Activated naive CD4-positive, alpha-beta T cell treated with anti-CD3 and anti-CD28 coated beads for 36 hours (primary cell): ENCODE measurements at regions of chr19 and their contacts with region 1.

Region 1: GRCh38 chr19:21396893-21397572 is at the start of gene ZNF493:
- DNase-seq: peak; percentile 97
- H3K4me3 Mint-ChIP-seq: peak within 1 kb of the TSS; percentile 96
- H3K27ac Mint-ChIP-seq: peak within 1 kb of the TSS; percentile 92
- H3K4me1 Mint-ChIP-seq: peaks cover 21% of the 10 kb centered on the region
- H3K27me3 Mint-ChIP-seq: no peaks in the 10 kb centered on the region
- total RNA-seq, gene ZNF493: 10.3 to 10.9 TPM

Region 2: DNA sequence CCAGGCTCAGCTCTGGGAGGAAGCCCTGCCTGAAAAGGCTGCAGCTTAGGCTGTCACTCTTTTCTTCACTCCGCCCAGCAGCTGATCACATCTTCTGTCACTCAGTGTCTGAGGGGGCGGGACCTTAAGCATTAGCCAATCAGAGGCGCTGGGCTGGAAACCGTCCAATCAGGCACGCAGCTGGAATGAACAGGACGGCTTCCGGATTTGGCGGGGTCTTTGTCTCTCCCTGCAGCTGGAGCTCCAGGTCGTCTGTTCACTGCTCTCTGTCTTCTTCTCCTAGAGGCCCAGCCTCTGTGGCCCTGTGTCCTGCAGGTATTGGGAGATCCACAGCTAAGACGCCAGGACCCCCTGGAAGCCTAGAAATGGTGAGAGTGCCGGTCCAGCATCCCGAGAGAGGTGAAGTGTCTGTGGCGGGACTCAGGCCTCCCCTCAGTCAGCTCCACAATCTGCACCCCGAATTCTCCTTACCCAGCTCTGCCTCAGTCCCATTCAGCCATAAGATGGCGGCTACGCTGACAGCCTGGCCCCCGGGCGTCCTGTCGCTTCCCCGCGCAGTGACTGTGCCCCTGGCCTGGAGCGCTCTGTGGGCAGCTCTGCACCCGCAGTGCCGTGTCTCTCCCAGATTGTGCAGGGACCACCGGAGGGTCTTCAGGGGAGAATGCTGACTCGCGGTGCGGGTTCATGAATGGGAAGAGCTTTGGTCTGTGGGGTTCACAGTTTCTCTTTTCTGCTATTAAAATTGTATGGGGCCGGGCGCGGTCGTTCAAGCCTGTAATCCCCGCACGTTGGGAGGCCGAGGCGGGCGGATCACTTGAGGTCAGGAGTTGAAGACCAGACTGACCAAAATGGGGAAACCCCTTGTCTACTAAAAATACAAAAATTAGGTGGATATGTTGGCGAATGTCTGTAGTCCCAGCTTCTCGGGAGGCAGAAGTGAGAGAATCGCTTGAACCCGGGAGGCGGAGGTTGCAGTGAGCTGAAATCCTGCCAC is 620.7 kb before region 1 on chr19 and contains the start of gene ZNF66:
- CTCF ChIA-PET with region 1: no interaction called
- intact Hi-C with region 1: loop called (anchors 2 kb)
- DNase-seq: peak; percentile 98
- H3K4me3 Mint-ChIP-seq: peak within 1 kb of the TSS; percentile 100
- H3K27ac Mint-ChIP-seq: peak within 1 kb of the TSS; percentile 95
- H3K4me1 Mint-ChIP-seq: peaks cover 18% of the 10 kb centered on the region
- H3K27me3 Mint-ChIP-seq: no peaks in the 10 kb centered on the region
- total RNA-seq, gene ZNF66: 3.9 to 4.9 TPM

Region 3: GRCh38 chr19:21020298-21021227 is 376.5 kb before region 1 on chr19 and contains the start of gene ZNF430:
- CTCF ChIA-PET with region 1: no interaction called
- intact Hi-C with region 1: loop called (anchors 5 kb)
- DNase-seq: peak; percentile 98
- H3K4me3 Mint-ChIP-seq: peak within 1 kb of the TSS; percentile 98
- H3K27ac Mint-ChIP-seq: peak within 1 kb of the TSS; percentile 98
- H3K4me1 Mint-ChIP-seq: peaks cover 42% of the 10 kb centered on the region
- H3K27me3 Mint-ChIP-seq: no peaks in the 10 kb centered on the region
- total RNA-seq, gene ZNF430: 18.2 to 19.5 TPM

Region 4: GRCh38 chr19:21314676-21315075 is 82.4 kb before region 1 on chr19:
- CTCF ChIA-PET with region 1: no interaction called
- intact Hi-C with region 1: no loop called
- DNase-seq: no peak
- H3K4me3 Mint-ChIP-seq: no peak overlapping the region
- H3K27ac Mint-ChIP-seq: peak overlapping the region; percentile 50
- H3K4me1 Mint-ChIP-seq: peaks cover 46% of the 10 kb centered on the region
- H3K27me3 Mint-ChIP-seq: no peaks in the 10 kb centered on the region

Region 5: DNA sequence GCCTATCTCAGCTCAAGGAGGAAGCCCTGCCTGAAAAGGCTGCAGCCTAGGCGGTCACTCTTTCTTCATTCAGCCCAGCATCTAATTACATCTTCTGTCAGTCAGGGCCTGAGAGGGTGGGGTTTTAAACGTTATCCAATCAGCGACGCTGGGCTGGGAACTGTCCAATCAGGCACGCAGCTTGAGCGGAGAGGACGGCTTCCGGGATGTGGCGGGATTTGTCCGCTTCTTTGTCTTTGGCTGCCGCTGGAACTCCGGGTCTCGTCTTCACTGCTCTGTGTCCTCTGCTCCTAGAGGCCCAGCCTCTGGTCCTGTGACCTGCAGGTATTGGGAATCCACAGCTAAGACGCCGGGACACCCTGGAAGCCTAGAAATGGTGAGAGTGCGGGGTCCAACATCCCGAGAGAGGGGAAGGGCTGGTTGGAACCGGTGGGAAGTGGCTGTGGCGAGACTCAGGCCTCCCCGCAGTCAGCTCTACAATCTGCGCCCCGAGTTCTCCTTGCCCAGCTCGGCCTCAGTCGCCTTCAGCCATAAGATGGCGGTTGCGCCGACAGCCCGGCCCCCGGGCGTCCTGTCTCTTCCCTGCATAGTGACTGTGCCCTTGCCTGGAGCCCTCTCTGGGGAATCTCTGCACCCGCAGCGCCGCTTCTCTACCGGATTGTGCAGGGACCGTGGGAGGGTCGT is 38.1 kb before region 1 on chr19 and contains the start of gene ZNF738:
- CTCF ChIA-PET with region 1: no interaction called
- intact Hi-C with region 1: loop called (anchors 1 kb)
- DNase-seq: peak; percentile 93
- H3K4me3 Mint-ChIP-seq: peak within 1 kb of the TSS; percentile 99
- H3K27ac Mint-ChIP-seq: peak within 1 kb of the TSS; percentile 93
- H3K4me1 Mint-ChIP-seq: peaks cover 8% of the 10 kb centered on the region
- H3K27me3 Mint-ChIP-seq: no peaks in the 10 kb centered on the region
- total RNA-seq, gene ZNF738: 16.6 to 17.1 TPM

Region 6: GRCh38 chr19:21851596-21852345 is 454.7 kb after region 1 on chr19:
- CTCF ChIA-PET with region 1: no interaction called
- intact Hi-C with region 1: loop called (anchors 10 kb)
- DNase-seq: peak; percentile 97
- H3K4me3 Mint-ChIP-seq: peak overlapping the region; percentile 88
- H3K27ac Mint-ChIP-seq: peak overlapping the region; percentile 91
- H3K4me1 Mint-ChIP-seq: peaks cover 31% of the 10 kb centered on the region
- H3K27me3 Mint-ChIP-seq: no peaks in the 10 kb centered on the region